Activated T-helper 2 cell treated with anti-CD3 and anti-CD28 coated beads, Interferon-gamma antibody, Interleukin-2, Interleukin-4, amounts not matched to agents 10 μg/mL and 5 μg/mL and 100 μg/mL, durations not matched to agents 14 hours and 24 hours and 36 hours (primary cell): ENCODE measurements at regions of chr10 and their contacts with region 1.

Region 1: DNA sequence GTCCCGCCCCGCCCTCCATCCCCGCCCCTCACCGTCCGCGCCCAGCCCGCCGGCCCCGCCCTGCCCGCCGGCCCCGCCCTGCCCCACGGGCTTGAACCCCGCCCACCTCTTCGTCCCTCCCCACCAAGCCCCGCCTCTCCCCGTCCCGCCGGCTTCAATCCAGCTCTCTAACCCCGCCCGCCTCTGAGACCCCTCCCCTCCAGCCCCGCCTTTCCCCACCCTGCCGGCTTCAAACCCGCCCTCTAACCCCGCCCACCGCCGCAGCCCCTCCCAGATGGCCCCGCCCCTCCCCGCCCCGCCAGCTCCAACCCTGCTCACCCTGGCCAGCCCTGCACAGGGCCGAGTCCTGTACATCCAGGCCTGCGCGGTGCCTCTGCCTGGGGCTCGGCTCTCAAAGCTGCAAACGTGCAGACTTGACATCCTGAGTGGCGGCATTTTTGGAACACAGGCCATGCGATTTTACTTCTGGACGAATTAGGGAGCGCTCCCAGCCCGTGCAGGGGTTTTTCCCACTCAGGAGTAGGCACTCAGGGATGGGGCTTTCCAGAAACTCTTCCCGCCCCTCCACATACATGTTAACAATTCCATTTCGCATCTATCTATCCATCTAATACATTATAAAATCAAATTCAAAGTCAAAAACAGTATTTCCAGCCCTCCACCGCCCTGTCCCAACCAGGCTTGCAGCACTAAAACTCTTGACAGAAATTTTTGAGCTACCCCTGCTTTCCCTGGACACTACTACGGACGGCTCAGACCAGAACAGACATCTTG is 475 bp upstream of the NMT2 start:
- DNase-seq: peak; percentile 86
- H3K4me3 Mint-ChIP-seq: peak overlapping the region; percentile 78
- H3K27ac Mint-ChIP-seq: peak overlapping the region; percentile 91
- H3K4me1 Mint-ChIP-seq: peaks cover 52% of the 10 kb centered on the region
- H3K27me3 Mint-ChIP-seq: no peaks in the 10 kb centered on the region

Region 2: DNA sequence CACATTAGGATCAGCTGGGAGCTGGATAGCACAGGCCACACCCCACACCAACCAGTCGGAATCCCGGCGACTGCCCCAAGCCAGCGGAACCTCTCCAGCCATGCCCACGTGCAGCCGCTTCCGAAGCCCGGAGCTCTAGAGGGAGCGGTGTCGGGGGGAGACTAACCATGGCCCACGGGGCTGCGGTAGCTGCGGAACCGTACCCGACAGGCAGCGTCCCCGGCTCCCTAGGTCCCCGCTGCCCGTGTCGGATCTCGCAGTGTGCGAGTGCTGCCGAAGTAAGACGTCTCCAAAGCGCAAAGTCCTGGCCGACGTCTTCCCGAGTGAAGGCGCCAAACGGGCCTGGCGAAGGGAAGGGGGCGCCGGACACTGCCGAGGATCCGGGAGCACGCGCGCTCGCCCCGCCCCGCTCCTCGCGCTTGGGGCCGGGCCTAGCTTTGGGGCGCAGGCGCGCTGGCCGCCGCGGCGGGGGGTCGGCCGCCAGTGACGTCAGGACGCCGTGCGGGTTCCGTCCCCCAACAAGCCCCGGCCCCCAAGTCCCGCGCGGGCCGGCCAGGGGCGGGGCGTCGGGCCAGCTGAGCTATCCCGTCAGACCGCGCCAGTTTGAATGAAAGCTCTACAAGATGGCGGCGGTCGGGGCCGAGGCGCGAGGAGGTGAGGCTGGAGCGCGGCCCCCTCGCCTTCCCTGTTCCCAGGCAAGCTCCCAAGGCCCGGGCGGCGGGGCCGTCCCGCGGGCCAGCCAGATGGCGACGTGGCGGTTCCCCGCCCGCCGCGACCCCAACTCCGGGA is 290.5 kb before region 1 on chr10 and contains the start of gene SUV39H2:
- intact Hi-C with region 1: loop called (anchors 1 kb)
- DNase-seq: peak; percentile 93
- H3K4me3 Mint-ChIP-seq: peak within 1 kb of the TSS; percentile 94
- H3K27ac Mint-ChIP-seq: peak within 1 kb of the TSS; percentile 88
- H3K4me1 Mint-ChIP-seq: peaks cover 34% of the 10 kb centered on the region
- H3K27me3 Mint-ChIP-seq: no peaks in the 10 kb centered on the region
- total RNA-seq, gene SUV39H2: 44.0 and 45.0 TPM in 2 replicates

Region 3: GRCh38 chr10:15046626-15047025 is 122.3 kb before region 1 on chr10:
- intact Hi-C with region 1: no loop called
- DNase-seq: no peak
- H3K4me3 Mint-ChIP-seq: no peak overlapping the region
- H3K27ac Mint-ChIP-seq: no peak overlapping the region
- H3K4me1 Mint-ChIP-seq: peaks cover 11% of the 10 kb centered on the region
- H3K27me3 Mint-ChIP-seq: no peaks in the 10 kb centered on the region

Region 4: DNA sequence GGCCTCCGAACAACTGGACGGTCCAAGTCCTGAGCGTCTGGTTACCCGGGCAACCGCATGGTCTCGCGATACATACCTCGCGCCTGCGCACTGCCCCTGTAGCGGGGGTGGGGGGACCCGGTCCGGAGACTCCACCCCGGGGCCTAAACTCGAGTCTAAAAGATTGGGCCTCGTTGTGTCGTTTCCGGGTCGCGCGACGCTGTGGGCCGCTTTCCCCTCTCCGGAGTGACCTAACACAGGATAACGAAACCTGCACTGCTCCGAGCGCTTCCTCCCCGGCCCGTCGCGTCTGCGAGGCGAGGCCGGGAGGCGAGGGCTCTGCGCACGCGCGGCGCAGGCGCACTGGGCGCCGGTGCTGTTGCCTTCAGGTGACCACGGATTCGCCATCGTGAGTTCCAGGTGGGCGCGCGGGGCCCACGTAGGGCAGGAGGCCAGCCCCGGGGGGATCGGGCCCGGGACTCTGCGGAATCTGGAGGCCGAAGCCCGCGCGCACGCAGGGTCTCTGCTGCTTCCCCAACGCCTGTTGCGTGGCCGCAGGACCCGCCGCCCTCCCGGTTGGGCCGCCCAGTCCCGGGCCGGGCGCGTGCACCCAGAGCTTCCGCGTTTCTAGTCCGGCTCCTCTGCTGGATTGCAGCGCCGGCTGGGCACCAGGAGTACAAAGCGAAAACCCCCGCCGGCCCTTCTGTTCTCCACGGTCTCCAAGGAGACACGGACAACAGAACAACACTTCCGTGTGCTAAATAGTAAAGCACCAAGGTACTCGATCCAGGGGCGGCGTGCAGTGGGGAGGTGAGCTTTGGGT is 71.8 kb before region 1 on chr10 and contains the start of gene RPP38:
- intact Hi-C with region 1: loop called (anchors 1 kb)
- DNase-seq: peak; percentile 91
- H3K4me3 Mint-ChIP-seq: peak within 1 kb of the TSS; percentile 95
- H3K27ac Mint-ChIP-seq: peak within 1 kb of the TSS; percentile 98
- H3K4me1 Mint-ChIP-seq: peaks cover 21% of the 10 kb centered on the region
- H3K27me3 Mint-ChIP-seq: peaks cover 3% of the 10 kb centered on the region
- total RNA-seq, gene RPP38: 19.4 and 20.3 TPM in 2 replicates

Region 5: DNA sequence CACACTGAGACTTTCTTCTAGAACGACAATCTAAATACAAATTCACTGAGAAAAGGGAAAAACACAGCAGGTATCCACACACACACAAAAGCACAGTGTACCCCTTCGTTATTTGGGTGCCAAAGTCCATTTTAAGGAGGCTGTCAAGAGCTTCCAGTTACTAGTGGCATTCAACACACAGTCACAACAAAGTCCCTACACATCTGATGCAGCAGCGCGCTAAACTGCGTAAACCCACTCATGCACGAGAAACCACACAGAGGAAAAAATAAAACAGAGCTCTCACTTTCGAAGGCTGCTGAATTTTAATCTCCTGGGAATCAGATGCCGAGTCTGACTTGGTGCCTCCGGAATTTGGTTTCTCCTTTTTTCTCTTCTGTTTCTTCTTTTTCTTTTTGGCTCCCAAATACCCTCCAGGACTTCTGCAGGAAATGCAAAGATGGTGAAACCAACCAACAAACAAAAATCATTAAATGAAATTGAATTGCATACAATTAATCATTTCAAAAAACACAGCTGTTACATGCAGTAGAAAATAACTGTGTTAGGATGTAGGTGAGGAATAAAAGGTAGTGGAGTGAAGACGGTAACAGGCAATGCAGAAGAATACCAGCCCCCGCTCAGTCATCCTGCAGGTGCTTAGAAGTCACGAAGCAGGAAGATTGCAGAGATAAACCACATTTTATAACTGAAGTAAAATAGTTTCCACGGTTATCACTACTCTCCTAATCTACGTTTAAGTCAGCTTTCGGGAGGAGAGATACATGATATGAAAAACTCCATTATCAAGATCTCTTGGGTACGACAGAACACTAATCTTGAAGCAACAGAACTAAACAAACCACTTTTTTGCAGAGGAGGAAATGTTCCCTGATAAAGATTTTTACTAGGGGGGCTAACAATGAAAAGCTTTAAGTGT is 27.6 kb before region 1 on chr10:
- intact Hi-C with region 1: loop called (anchors 1 kb)
- DNase-seq: peak; percentile 36
- H3K4me3 Mint-ChIP-seq: peak overlapping the region; percentile 63
- H3K27ac Mint-ChIP-seq: peak overlapping the region; percentile 90
- H3K4me1 Mint-ChIP-seq: peaks cover 45% of the 10 kb centered on the region
- H3K27me3 Mint-ChIP-seq: no peaks in the 10 kb centered on the region

Region 6: DNA sequence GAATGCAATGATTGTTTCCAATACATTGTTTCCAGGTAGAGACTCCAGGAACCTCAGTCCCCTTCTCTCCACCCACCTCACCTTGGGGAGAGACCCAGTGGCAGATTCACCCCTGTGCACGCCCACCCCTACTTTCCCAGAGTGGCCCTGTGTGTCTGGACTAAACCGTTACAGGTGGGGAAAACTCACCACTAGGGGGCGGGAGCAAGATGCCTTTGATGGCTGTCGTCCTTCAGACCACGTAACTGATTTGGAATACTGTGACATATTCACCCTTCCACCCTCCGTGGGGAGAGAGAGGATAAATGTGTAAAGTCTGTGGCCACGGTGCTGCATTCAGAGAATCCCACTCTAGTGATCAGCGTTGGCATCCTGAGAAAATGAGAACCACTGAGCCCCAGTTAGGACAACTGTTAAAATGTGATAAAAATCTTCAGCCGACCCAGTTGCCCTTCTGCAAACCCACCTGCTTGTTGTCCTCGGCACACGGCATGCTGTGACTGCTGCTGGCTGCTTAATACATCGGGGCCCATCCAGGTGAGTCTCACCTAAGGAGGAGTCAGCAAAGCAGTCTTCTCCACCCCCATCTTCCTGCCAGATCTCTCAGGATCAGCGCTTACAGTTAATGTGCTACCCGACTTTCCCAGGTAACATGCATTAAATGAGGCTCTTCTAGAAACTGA is 41.0 kb after region 1 on chr10:
- intact Hi-C with region 1: loop called (anchors 1 kb)
- DNase-seq: peak; percentile 66
- H3K4me3 Mint-ChIP-seq: no peak overlapping the region
- H3K27ac Mint-ChIP-seq: no peak overlapping the region
- H3K4me1 Mint-ChIP-seq: peaks cover 42% of the 10 kb centered on the region
- H3K27me3 Mint-ChIP-seq: no peaks in the 10 kb centered on the region

Region 7: GRCh38 chr10:15370856-15371701 is 202.1 kb after region 1 on chr10 and contains the start of gene FAM171A1:
- intact Hi-C with region 1: loop called (anchors 5 kb)
- DNase-seq: peak; percentile 59
- H3K4me3 Mint-ChIP-seq: peak within 1 kb of the TSS; percentile 77
- H3K27ac Mint-ChIP-seq: no peak within 1 kb of the TSS
- H3K4me1 Mint-ChIP-seq: peaks cover 5% of the 10 kb centered on the region
- H3K27me3 Mint-ChIP-seq: peaks cover 64% of the 10 kb centered on the region
- total RNA-seq, gene FAM171A1: 2.9 and 3.6 TPM in 2 replicates